MCF 10A (cell line): ENCODE measurements at regions of chr13 and their contacts with region 1.

Region 1: GRCh38 chr13:97141564-97142005 is 80.5 kb upstream of the MBNL2 start:
- DNase-seq: peak; percentile 96
- H3K4me3 Mint-ChIP-seq: no peak overlapping the region
- H3K27ac Mint-ChIP-seq: peak overlapping the region; percentile 18
- H3K4me1 Mint-ChIP-seq: peaks cover 8% of the 10 kb centered on the region
- H3K27me3 Mint-ChIP-seq: peaks cover under 1% of the 10 kb centered on the region
- CTCF ChIP-seq: no peak

Region 2: GRCh38 chr13:97124916-97125809 is 16.4 kb before region 1 on chr13:
- CTCF ChIA-PET with region 1: interaction called, 19 read pairs
- POLR2A ChIA-PET with region 1: interaction called, 25 read pairs
- intact Hi-C with region 1: no loop called
- DNase-seq: peak; percentile 89
- H3K4me3 Mint-ChIP-seq: peak overlapping the region; percentile 28
- H3K27ac Mint-ChIP-seq: peak overlapping the region; percentile 21
- H3K4me1 Mint-ChIP-seq: peaks cover 47% of the 10 kb centered on the region
- H3K27me3 Mint-ChIP-seq: no peaks in the 10 kb centered on the region
- CTCF ChIP-seq: no peak

Region 3: GRCh38 chr13:97130190-97130589 is 11.4 kb before region 1 on chr13:
- CTCF ChIA-PET with region 1: interaction called, 19 read pairs
- POLR2A ChIA-PET with region 1: interaction called, 25 read pairs
- intact Hi-C with region 1: no loop called
- DNase-seq: peak; percentile 28
- H3K4me3 Mint-ChIP-seq: no peak overlapping the region
- H3K27ac Mint-ChIP-seq: no peak overlapping the region
- H3K4me1 Mint-ChIP-seq: peaks cover 19% of the 10 kb centered on the region
- H3K27me3 Mint-ChIP-seq: peaks cover 11% of the 10 kb centered on the region
- CTCF ChIP-seq: no peak